ENCODE measurements at regions of chr22 and their contacts with region 1.

Region 1: GRCh38 chr22:29480512-29481264 is 670 bp downstream of the NEFH start:
- DNase-seq: peak; percentile 61
- ATAC-seq: no peak
- H3K4me3 ChIP-seq: peak overlapping the region in 2 of 5 experiments; percentile 8 to 24
- H3K4me3 Mint-ChIP-seq: peak overlapping the region; percentile 79
- H3K27ac ChIP-seq: no peak overlapping the region
- H3K27ac Mint-ChIP-seq: no peak overlapping the region
- H3K4me1 ChIP-seq: peaks cover 30 to 38% of the 10 kb centered on the region in 2 donors
- H3K4me1 Mint-ChIP-seq: peaks cover 38% of the 10 kb centered on the region
- H3K27me3 ChIP-seq: peaks cover 0 to 64% (median 43%) of the 10 kb centered on the region in 4 experiments
- H3K27me3 Mint-ChIP-seq: peaks cover 35% of the 10 kb centered on the region
- CTCF ChIP-seq: no peak

Region 2: DNA sequence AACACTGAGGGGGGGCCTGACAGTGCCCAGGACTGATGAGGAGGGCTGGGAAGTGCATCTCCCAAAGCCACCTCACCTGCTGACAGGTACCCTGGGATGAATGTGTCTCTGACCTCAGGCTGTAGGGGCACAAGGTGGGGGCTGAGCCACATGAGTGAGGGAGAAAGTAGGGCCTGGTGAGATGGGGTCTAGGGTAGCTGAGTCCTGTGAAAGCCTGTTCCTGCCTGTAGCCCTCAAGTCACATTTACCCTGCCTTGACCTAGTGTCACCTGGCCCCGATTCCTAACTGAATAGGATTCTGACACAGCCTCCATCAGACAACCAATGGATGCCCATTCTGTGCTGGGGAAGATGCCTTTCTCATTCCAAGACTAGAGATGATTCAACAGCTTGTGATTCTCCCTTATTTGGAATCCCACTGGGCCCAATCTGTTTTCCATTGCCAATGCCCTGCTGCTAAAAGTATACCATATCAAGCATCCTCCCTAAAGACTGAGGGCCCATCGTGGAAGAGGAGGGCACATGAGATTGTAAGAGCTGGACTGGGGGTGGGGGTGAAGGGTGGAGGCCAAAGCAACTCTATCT is 53.4 kb before region 1 on chr22:
- CTCF ChIA-PET with region 1: no interaction called
- POLR2A ChIA-PET with region 1: no interaction called
- intact Hi-C with region 1: no loop called
- DNase-seq: no peak
- ATAC-seq: no peak
- H3K4me3 ChIP-seq: no peak overlapping the region
- H3K4me3 Mint-ChIP-seq: no peak overlapping the region
- H3K27ac ChIP-seq: no peak overlapping the region
- H3K27ac Mint-ChIP-seq: no peak overlapping the region
- H3K4me1 ChIP-seq: peaks cover 0 to 2% of the 10 kb centered on the region in 2 donors
- H3K4me1 Mint-ChIP-seq: peaks cover 2% of the 10 kb centered on the region
- H3K27me3 ChIP-seq: peaks cover 0 to 8% (median 0%) of the 10 kb centered on the region in 4 experiments
- H3K27me3 Mint-ChIP-seq: peaks cover 13% of the 10 kb centered on the region
- CTCF ChIP-seq: no peak

Region 3: DNA sequence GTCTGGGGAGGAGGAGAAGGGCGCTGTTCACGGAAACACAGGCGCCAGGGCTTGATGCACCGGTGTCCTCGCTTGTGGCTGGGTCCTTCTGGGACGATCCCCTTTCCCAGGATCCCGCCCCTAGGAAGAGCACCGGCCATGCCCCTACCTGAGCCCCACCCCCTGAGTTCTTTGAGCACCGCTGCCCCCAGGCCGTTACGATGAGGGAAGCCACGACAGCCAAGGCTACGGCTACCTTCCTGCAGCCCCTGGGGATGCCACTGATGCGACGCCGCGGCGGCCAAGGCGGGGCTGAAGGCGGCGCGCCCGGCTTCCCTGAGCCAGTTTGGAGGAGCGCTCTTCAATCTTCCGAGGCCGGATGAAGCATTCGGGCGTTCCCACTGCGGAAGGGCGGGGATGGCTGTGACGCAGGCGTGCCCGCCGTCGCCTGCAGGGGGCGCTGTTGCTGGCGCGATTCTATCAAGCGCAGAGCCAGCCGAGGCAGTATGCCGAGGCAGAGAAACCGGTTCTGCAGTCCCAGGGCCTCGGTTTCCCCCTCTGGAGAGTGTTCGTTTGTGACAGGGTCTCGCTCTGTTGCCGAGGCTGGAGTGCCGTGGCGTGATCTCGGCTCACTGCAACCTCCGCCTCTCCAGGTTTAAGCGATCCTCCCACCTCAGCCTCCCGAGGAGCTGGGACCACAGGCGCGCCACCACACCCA is 10.4 kb before region 1 on chr22:
- CTCF ChIA-PET with region 1: interaction called, 10 read pairs
- POLR2A ChIA-PET with region 1: interaction called, 3 read pairs
- intact Hi-C with region 1: no loop called
- DNase-seq: peak; percentile 76
- ATAC-seq: peak; percentile 70
- H3K4me3 ChIP-seq: peak overlapping the region in 3 of 5 experiments; percentile 15 to 49 (median 37)
- H3K4me3 Mint-ChIP-seq: peak overlapping the region; percentile 70
- H3K27ac ChIP-seq: no peak overlapping the region
- H3K27ac Mint-ChIP-seq: no peak overlapping the region
- H3K4me1 ChIP-seq: peaks cover 11 to 13% of the 10 kb centered on the region in 2 donors
- H3K4me1 Mint-ChIP-seq: peaks cover 17% of the 10 kb centered on the region
- H3K27me3 ChIP-seq: peaks cover 0 to 30% (median 5%) of the 10 kb centered on the region in 4 experiments
- H3K27me3 Mint-ChIP-seq: peaks cover 30% of the 10 kb centered on the region
- CTCF ChIP-seq: peak; percentile 84

Measured in B cell (primary cell).